Tibial artery (tissue), 4 donors: ENCODE measurements at regions of chr5 and their contacts with region 1.

Region 1: DNA sequence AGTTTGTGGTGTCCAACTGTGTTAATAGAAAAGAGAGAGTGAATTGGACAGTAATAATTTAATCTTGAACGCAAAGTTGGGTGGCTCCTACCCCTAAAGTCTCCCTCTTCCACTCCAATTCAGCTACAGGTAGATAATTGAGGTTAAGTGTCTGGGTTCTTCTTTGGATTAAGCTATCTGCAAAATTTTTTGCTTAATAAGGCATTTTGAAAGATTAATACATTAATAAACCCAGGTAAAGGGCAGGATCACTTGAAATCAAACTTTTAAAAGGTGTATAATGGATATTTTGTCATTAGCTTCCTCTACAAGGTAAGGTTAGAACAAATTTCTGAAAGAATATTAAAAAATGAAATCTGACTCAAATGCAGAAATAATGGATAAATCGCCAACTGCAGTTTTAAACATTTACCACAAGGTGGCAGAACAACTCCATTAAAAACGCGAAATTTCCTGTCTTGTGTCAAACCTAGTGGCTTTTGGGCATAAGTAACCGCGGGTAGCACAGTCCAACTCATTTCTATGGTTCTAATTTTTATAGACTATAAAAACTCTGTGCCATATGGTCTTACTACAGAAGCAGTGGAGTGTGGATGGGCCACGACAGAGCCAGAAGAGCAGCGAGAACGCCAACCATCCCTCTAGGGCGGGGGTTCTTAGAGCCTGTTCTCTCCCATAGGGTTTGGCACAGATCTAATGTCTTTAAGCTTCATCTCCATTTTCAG is 276.5 kb downstream of the ARHGEF28 start:
- DNase-seq: no peak
- H3K4me3 ChIP-seq: no peak overlapping the region
- H3K27ac ChIP-seq: no peak overlapping the region
- H3K4me1 ChIP-seq: peaks cover 0 to 5% (median 0%) of the 10 kb centered on the region in 4 donors
- H3K27me3 ChIP-seq: no peaks in the 10 kb centered on the region
- CTCF ChIP-seq: peak; percentile 78 to 88

Region 2: DNA sequence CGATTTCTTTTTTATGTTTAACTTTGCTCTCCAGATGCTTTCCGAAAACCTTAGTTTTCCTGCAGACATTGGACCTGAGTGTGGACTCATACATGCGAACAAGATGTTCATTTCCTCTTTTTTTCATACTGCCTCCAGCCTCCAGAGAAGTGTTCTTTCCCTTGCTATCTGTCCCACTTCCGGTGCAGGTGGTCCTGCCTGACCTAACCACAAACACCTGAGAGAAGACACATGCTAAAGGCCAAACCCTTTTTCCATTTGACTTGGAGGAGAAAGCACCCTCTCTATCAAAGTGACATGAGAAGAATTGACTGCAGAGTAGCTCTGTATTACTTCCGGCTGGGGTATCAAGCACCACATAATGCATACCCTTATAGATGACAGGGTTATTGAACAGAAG is 57.5 kb after region 1 on chr5:
- intact Hi-C with region 1: no loop called
- DNase-seq: no peak
- H3K4me3 ChIP-seq: no peak overlapping the region
- H3K27ac ChIP-seq: no peak overlapping the region
- H3K4me1 ChIP-seq: peaks cover 0 to 10% (median 1%) of the 10 kb centered on the region in 4 donors
- H3K27me3 ChIP-seq: no peaks in the 10 kb centered on the region
- CTCF ChIP-seq: no peak

Region 3: DNA sequence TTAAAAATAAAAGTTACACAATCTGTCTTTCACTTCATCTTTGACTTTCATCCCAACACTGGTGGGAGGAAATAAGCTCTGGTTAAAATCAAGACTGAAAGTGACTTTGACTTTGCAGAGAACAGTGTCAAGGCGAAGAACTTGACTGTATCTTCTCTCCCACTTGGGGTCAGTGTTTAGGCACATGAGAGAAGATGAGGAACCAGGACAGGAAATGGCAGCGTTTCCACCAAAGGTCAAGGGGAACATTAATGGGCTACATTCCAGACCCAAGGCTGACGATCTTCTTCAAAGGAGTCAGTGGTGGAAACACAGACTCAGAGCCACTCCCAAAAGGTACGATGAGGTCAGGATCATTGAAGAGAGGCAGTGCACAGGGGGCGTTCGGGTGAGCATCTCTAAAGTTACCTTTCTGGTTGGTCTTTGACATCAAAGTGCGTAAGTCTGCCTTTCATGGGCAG is 133.1 kb after region 1 on chr5:
- intact Hi-C with region 1: loop called (anchors 5 kb)
- DNase-seq: peak in 1 of 2 donors; percentile 28
- H3K4me3 ChIP-seq: no peak overlapping the region
- H3K27ac ChIP-seq: no peak overlapping the region
- H3K4me1 ChIP-seq: no peaks in the 10 kb centered on the region
- H3K27me3 ChIP-seq: no peaks in the 10 kb centered on the region
- CTCF ChIP-seq: peak; percentile 22 to 23

Region 4: DNA sequence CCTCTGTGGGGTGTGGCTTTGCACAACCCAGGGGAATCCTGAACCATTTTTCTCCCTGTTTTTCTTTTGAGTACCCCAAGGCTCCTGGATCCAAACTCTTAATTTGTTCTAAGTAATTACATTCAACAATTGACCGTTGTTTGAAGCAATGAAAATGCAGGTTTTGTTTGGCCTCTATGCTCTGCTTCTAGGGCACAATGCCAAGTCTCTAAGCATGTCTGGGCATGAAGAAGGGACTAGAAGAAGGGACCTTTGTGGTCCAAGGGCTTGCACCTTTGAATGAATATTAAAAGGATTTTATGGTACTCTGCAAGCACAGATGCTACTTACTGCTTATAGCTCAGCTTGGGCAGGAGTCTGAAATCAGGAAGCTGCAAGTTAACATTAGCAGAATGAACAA is 744.6 kb after region 1 on chr5:
- intact Hi-C with region 1: loop called (anchors 2 kb)
- DNase-seq: no peak
- H3K4me3 ChIP-seq: no peak overlapping the region
- H3K27ac ChIP-seq: no peak overlapping the region
- H3K4me1 ChIP-seq: peaks cover 0 to 13% (median 3%) of the 10 kb centered on the region in 4 donors
- H3K27me3 ChIP-seq: no peaks in the 10 kb centered on the region
- CTCF ChIP-seq: no peak